Activated naive CD4-positive, alpha-beta T cell treated with anti-CD3 and anti-CD28 coated beads, Interleukin-2, amount 10 ng/mL, durations not matched to agents 7 days and 5 days (primary cell): ENCODE measurements at regions of chr17 and their contacts with region 1.

Region 1: DNA sequence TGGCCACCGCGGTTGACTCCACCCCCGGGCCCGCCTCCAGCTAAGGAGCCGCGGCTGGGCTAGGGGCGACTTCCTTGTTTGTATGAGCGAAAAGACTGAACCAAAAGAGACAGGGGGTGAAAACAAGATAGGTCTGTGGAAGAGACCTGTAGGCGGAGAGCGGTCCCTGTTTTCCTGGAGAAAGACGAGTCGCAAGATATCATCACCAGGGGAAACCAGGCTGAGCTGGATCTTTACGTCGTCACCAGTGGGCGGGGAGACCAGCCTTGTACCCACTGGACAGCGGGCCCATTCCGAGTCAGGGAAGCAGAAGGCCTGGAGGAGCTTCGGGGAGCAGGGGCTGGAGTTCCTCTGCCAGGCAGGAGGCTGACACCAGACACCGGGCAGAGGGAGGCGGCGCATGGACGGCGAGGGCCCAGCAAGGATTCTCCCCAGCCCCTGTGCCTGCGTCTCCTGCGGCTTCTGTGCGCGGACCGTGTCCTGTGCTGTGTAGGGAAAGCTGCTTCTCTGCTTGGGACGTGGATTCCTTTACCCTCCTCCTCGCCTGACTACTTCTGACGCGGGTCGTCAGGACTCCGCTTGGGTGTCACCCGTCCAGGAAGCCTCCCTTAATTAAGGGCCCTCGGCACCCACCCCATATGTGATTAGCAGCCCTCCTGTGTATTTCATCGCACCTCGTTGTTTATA is 10.3 kb upstream of the ARL4D start:
- DNase-seq: peak; percentile 94
- H3K4me3 Mint-ChIP-seq: peak overlapping the region; percentile 89
- H3K27ac Mint-ChIP-seq: peak overlapping the region; percentile 98
- H3K4me1 Mint-ChIP-seq: peaks cover 23% of the 10 kb centered on the region
- H3K27me3 Mint-ChIP-seq: peaks cover under 1% of the 10 kb centered on the region

Region 2: DNA sequence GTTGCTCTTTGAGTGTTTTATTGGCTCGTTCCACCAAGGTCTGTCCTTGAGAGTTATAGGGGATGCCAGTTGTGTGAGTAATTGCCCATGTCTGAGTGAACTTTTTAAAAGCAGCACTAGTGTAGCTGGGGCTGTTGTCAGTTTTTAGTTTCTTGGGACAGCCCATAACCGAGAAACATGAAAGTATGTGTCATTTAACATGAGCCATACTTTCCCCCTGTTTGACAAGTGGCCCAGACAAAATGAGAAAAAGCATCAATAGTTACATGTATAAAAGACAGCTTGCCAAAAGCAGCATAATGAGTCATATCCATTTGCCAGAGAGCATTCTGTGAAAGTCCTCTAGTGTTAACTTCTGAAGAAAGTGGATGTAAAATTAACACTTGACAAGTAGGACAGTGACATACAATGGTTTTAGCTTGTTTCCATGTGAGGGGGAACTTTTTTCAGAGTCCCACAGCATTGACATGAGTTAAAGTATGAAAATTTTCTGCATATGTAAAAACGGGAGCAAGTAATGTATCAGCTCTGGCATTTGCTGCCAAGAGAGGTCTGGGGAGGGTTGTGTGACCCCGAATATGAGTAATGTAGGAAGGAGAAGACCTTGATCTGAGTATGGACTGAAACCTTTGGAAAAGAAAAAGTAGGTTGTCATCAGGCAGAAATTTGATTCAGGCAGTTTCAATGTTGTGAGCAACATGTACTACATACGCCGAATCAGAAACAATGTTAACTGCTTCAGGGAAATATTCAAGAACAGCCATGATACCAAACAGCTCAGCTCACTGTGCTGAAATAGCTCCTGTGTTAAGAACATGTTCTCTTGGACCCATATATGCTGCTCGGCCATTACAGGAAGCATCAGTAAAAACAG is 46.5 kb before region 1 on chr17:
- CTCF ChIA-PET with region 1: no interaction called
- DNase-seq: no peak
- H3K4me3 Mint-ChIP-seq: no peak overlapping the region
- H3K27ac Mint-ChIP-seq: no peak overlapping the region
- H3K4me1 Mint-ChIP-seq: no peaks in the 10 kb centered on the region
- H3K27me3 Mint-ChIP-seq: peaks cover 3% of the 10 kb centered on the region

Region 3: DNA sequence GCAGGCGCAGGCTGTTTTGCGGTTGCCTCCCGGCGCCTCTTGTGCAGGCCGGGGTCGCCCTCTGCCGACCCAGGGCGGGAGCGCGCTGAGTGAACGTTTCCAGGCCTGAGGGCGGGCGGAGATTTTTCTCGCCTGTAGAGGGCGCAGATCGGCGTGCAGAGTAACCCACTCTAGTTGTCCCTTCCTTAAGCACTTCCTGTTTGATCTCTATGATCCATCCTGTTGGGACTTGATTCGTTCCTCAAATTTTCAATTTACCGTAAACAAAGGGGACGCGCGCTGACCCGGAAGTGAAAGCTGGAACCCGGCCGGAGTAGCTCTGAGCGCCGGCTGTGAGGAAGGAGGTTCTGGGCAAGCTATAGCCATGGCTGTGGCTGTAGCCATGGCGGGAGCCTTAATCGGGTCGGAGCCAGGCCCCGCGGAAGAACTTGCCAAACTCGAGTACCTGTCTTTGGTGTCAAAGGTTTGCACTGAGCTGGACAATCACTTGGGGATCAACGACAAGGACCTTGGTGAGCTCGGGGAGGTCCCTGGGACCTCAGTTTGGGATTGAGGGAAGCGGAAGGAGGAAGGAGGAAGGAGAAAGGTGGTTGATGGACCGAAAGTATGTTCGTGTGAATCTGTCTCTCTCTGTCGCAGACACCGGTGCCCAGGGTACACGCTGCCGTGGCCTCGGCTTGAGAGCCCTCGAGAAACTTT is 95.3 kb after region 1 on chr17 and contains the start of gene DHX8:
- CTCF ChIA-PET with region 1: interaction called, 134 read pairs
- DNase-seq: peak; percentile 98
- H3K4me3 Mint-ChIP-seq: peak within 1 kb of the TSS; percentile 100
- H3K27ac Mint-ChIP-seq: peak within 1 kb of the TSS; percentile 99
- H3K4me1 Mint-ChIP-seq: peaks cover 41% of the 10 kb centered on the region
- H3K27me3 Mint-ChIP-seq: peaks cover 6% of the 10 kb centered on the region